Cardiac septum (tissue), 1 donor: ENCODE measurements at regions of chrX and their contacts with region 1.

Region 1: DNA sequence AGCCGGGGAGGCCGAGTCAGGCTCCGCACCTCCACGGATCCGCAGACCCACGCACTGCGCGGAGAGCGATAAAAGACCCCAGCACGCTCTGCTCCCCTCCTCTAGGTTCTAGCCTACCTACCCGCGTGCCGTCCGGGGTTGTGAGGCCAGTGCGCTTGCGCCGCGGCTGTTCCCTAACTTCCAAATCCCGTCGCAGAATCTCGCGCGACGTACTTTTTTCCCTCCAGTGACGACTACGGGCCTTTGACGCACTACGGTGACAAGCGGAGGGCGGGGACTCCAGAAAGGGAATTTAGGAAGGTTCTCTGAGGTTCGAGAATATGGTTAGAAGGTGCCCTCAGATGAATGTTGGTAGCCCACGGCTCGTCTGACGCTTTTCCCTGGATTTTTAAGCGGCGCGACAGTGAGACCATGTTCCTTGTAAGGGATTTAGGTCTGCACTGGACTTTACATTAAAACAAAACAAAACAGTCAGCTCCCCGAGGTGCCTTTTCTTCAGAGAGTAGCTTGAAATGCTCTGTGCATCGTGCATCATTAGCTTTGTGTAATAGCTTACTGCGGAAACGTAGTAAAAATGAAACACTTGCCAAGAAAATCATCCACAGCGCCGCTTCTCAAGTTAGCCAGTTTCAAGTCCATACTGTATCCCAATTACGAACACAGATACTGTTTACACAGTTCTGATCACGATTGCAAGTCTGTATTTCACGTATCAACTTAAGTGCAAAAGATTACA is at the start of gene NKRF:
- DNase-seq: peak; percentile 94
- total RNA-seq, gene NKRF: 5.3 TPM

Region 2: DNA sequence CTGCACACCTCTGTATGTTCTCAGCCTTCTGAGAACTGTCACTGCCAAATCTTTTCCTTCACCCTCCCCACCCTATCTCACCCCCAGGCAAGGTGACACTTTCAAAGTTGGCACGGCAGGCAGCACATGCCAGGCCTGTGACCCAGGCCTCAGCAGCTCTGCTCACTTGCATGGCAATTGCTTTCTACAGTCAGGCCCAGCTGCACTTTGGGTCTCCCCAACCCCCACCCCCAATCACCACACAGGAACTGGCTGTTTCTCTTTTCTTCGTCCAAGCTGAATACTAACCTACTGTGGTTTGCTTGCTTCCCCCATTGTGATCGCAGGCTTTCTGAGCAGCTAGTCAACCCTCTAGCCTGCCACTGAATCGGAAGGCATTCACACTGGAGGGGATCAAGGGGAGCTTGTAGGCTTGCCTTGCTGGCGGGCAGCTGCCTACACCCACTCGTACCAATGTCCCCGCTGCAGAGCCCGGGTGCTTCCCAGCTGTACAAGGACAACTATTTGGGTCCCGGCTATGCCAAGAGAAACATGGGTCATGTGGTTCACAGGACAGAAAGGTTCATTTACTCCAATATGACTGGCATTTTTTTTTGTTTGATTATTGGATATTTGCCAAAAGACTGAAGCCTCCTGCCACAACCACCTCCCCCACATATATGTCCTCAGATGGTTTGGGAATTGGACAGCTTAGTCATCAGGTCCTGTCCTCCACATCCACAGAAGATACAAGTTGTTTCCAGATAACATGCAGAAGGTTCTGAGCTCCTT is 179.2 kb before region 1 on chrX:
- intact Hi-C with region 1: no loop called
- DNase-seq: no peak

Region 3: GRCh38 chrX:119516157-119516702 is 90.2 kb before region 1 on chrX:
- intact Hi-C with region 1: loop called (anchors 10 kb)
- DNase-seq: no peak

Region 4: GRCh38 chrX:119669424-119670037 is 63.1 kb after region 1 on chrX:
- intact Hi-C with region 1: no loop called
- DNase-seq: peak; percentile 58

Region 5: GRCh38 chrX:119729408-119730201 is 123.2 kb after region 1 on chrX:
- intact Hi-C with region 1: loop called (anchors 5 kb)
- DNase-seq: no peak

Region 6: GRCh38 chrX:119791438-119792231 is 185.2 kb after region 1 on chrX and contains the start of gene RPL39:
- intact Hi-C with region 1: loop called (anchors 5 kb)
- DNase-seq: peak; percentile 91
- total RNA-seq, gene RPL39: 733 TPM